ENCODE measurements at regions of chrX and their contacts with region 1.

Region 1: DNA sequence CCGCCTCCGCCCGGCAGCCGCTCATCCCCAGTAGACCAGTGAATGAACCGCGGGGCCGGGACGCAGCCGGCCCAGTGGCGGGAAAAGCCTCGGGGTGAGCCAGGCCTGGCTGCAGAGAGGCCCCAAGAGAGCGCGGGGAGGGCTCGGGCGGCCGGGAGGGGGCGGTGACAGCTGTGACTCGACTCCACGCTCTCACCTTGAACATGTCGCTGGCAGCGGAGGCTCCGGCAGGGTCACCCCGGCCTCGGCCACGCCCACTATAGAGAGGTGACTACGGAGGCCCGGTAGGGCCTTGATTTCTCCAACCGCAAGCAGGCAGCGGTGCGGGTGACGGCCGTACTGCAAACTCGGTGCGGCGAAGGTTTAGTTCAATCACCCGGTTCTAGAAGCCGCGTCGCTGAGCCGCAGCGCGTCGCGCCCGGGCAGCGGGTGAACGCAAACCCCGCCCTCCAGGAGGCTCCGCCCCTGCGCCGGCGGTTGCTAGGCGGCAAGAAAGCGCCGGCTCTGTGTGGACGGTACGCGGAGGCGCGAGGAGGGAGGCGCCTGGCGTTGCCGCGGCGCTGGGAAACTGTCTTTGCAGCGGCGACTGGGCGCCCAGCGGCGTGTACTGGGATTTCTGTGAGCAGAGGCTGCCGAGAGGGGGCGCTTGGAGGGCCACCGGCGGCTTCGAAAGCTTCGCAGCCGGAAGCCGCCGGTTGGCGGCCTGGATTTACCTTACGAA is at the starts of genes APOO and CXorf58:
- DNase-seq: peak; percentile 89
- CTCF ChIP-seq: peak; percentile 55

Region 2: GRCh38 chrX:23694606-23695005 is 213.1 kb before region 1 on chrX:
- CTCF ChIA-PET with region 1: interaction called, 64 read pairs
- POLR2A ChIA-PET with region 1: no interaction called
- DNase-seq: peak; percentile 67
- CTCF ChIP-seq: peak; percentile 51

Region 3: GRCh38 chrX:23756157-23756559 is 151.5 kb before region 1 on chrX:
- CTCF ChIA-PET with region 1: interaction called, 17 read pairs
- POLR2A ChIA-PET with region 1: no interaction called
- DNase-seq: peak; percentile 65
- CTCF ChIP-seq: peak; percentile 42

Region 4: DNA sequence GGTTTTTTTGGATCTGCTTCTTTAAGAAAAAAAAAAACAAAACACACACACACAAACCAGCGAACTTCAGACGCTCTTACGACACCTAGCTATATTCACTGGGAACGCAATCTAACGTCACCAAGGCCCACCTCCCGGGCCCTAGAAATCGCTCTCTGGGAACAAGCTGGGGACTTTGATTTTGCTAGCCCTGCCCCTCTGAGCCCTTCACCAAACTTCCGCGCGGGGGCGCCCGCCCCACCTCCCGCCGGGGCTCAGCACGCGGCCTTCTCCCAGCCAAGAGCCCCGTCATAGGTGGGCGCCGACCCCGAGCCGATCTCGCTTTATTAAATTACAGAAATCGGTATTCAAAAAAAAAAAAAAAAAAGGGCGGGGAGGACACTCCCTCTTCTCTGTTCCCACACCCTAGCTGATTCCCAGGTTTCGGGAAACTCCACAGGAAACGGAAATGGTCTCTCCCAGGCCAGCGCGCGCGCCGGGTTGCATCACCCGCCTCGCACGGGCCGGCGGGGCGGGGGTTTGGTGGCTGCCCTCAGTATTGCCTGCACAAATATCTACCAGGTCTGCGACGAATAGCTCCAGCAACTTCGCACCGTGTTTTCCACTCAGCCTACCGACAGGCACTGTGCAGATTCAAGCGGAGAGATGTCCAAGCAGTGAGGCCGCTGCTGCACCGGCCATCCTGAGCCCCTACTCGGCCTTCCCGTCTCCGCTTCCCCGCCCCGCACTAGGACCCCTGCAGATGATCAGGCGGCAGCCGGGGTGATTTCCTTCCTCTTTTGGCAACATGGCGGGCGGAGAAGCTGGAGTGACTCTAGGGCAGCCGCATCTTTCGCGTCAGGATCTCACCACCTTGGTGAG is 146.8 kb after region 1 on chrX and contains the start of gene EIF2S3:
- CTCF ChIA-PET with region 1: interaction called, 23 read pairs
- POLR2A ChIA-PET with region 1: no interaction called
- DNase-seq: peak; percentile 89
- CTCF ChIP-seq: peak; percentile 10